ENCODE measurements at regions of chr11 and their contacts with region 1.

Region 1: GRCh38 chr11:96149743-96150555 is 193.0 kb downstream of the MAML2 start:
- DNase-seq: no peak
- H3K4me3 Mint-ChIP-seq: no peak overlapping the region
- H3K27ac Mint-ChIP-seq: no peak overlapping the region
- H3K4me1 Mint-ChIP-seq: peaks cover 59% of the 10 kb centered on the region
- H3K27me3 Mint-ChIP-seq: no peaks in the 10 kb centered on the region

Region 2: GRCh38 chr11:95923728-95924413 is 226.1 kb before region 1 on chr11 and contains the start of gene MTMR2:
- CTCF ChIA-PET with region 1: no interaction called
- intact Hi-C with region 1: no loop called
- DNase-seq: peak; percentile 62
- H3K4me3 Mint-ChIP-seq: peak within 1 kb of the TSS; percentile 94
- H3K27ac Mint-ChIP-seq: peak within 1 kb of the TSS; percentile 95
- H3K4me1 Mint-ChIP-seq: peaks cover 28% of the 10 kb centered on the region
- H3K27me3 Mint-ChIP-seq: no peaks in the 10 kb centered on the region
- total RNA-seq, gene MTMR2: 32.5 to 34.6 TPM

Region 3: DNA sequence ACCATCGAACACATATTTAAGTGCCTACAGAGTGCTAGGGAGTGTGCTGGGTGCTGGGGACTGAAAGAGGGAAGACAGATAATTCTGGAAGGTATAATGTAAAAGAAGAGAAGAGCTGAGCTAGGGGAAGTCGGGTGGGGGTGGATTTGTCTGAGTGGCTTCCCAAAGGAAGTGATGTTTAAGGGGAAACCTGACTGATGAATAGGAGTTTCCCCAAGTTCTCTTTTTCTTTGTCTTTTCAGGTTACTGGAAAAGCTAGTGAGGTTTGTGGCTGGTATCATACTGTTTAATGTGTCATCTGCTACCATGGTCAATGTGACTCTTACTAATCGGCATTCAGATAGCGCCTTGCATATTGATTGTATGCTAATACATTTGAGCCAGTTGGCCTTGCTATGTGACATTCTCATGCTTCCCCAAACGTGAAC is 74.4 kb before region 1 on chr11:
- CTCF ChIA-PET with region 1: no interaction called
- intact Hi-C with region 1: loop called (anchors 2 kb)
- DNase-seq: peak; percentile 63
- H3K4me3 Mint-ChIP-seq: peak overlapping the region; percentile 2
- H3K27ac Mint-ChIP-seq: peak overlapping the region; percentile 93
- H3K4me1 Mint-ChIP-seq: peaks cover 85% of the 10 kb centered on the region
- H3K27me3 Mint-ChIP-seq: no peaks in the 10 kb centered on the region

Region 4: DNA sequence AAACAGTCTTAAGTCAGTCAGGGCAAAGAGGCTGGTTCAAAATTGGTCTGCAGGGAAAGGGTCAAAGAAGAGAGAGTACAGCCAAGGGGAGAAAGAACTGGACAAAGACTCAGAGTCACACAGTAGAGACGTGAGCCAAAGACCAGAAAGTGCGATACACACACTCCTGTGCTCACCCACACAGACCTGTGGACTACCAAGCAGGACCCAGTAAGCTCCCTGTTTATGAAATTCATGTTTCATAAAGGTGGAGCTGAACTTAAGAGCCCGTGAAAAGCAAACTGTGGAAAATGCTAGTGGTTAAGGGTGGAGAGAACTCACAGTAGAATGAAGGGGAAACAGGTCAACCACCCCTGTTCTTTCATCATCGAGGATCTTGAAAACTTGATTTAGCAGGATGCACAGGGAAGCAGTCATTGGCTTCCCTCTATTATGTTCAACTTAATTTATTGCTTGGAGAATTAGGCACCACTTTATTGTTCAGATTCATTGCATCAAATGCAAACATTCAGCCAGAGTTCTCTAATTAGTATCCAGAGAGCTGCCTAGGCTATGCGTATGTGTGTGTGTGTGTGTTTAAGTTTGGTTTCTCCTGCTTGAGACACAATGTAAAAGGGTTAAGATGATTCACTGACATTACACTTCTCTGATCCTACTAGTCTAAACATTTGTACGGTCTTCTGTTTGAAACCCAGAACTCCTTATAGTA is 65.2 kb before region 1 on chr11:
- CTCF ChIA-PET with region 1: no interaction called
- intact Hi-C with region 1: loop called (anchors 2 kb)
- DNase-seq: peak; percentile 51
- H3K4me3 Mint-ChIP-seq: peak overlapping the region; percentile 63
- H3K27ac Mint-ChIP-seq: no peak overlapping the region
- H3K4me1 Mint-ChIP-seq: peaks cover 11% of the 10 kb centered on the region
- H3K27me3 Mint-ChIP-seq: no peaks in the 10 kb centered on the region

Region 5: GRCh38 chr11:96136613-96137298 is 13.2 kb before region 1 on chr11:
- CTCF ChIA-PET with region 1: interaction called, 6 read pairs
- intact Hi-C with region 1: loop called (anchors 2 kb)
- DNase-seq: no peak
- H3K4me3 Mint-ChIP-seq: peak overlapping the region; percentile 28
- H3K27ac Mint-ChIP-seq: peak overlapping the region; percentile 92
- H3K4me1 Mint-ChIP-seq: peaks cover 70% of the 10 kb centered on the region
- H3K27me3 Mint-ChIP-seq: no peaks in the 10 kb centered on the region

Region 6: GRCh38 chr11:96188243-96189006 is 38.5 kb after region 1 on chr11:
- CTCF ChIA-PET with region 1: interaction called, 3 read pairs
- intact Hi-C with region 1: loop called (anchors 1 kb)
- DNase-seq: peak; percentile 49
- H3K4me3 Mint-ChIP-seq: peak overlapping the region; percentile 38
- H3K27ac Mint-ChIP-seq: peak overlapping the region; percentile 92
- H3K4me1 Mint-ChIP-seq: peaks cover 90% of the 10 kb centered on the region
- H3K27me3 Mint-ChIP-seq: no peaks in the 10 kb centered on the region

Measured in activated naive CD4-positive, alpha-beta T cell treated with anti-CD3 and anti-CD28 coated beads for 36 hours (primary cell).